SK-N-SH (cell line): ENCODE measurements at regions of chr20 and their contacts with region 1.

Region 1: DNA sequence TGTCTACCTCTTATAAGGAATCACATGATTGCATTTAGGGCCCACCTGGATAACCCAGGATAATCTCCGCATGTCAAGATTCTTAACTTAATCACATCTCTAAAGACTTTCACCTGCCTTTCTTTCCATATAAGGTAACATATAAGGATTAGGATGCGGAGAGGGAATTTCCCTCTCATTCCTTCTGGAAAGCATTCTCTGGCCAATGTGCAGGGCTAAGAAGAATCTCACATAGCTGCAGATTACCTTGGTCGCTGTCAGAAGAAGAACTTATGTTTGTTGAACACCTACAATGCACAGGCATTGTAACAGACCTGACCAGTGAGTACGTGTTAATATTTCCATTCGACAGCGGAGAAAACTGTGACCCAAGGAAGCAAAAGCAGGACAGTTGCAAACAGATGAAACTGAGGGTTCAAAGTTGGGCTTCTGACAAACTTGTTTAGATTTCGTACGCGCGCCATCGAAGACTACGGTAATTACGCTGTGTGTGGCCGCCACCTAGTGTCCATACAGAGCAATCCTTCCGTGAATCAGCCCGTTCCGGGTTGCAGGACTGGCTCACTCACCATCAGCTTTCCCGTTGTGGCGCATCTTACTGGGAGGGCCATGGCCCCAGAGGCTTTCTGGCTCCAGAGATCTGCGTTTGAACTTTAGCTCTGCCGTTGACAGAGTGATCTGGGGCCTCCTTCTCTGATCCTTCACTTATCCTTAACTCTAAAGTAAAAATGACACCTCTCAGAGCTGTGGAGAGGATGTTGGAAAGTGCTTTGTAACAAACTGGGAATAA is 9.5 kb downstream of the C20orf202 start:
- DNase-seq: peak; percentile 74
- H3K4me3 ChIP-seq: no peak overlapping the region; a peak in 1 of 4 replicates
- H3K27ac ChIP-seq: no peak overlapping the region
- H3K4me1 ChIP-seq: no peaks in the 10 kb centered on the region; a peak in 1 of 4 replicates
- H3K27me3 ChIP-seq: no peaks in the 10 kb centered on the region; the same call in 1 of the 2 replicates
- CTCF ChIP-seq: peak; percentile 77
- EP300 ChIP-seq: no peak
- RAD21 ChIP-seq: peak; percentile 82

Region 2: GRCh38 chr20:1191299-1191698 is 21.5 kb before region 1 on chr20:
- CTCF ChIA-PET with region 1: interaction called, 33 read pairs
- POLR2A ChIA-PET with region 1: no interaction called
- DNase-seq: no peak
- H3K4me3 ChIP-seq: no peak overlapping the region
- H3K27ac ChIP-seq: no peak overlapping the region
- H3K4me1 ChIP-seq: no peaks in the 10 kb centered on the region
- H3K27me3 ChIP-seq: no peaks in the 10 kb centered on the region; the same call in 1 of the 2 replicates
- CTCF ChIP-seq: no peak
- EP300 ChIP-seq: no peak
- RAD21 ChIP-seq: no peak

Region 3: DNA sequence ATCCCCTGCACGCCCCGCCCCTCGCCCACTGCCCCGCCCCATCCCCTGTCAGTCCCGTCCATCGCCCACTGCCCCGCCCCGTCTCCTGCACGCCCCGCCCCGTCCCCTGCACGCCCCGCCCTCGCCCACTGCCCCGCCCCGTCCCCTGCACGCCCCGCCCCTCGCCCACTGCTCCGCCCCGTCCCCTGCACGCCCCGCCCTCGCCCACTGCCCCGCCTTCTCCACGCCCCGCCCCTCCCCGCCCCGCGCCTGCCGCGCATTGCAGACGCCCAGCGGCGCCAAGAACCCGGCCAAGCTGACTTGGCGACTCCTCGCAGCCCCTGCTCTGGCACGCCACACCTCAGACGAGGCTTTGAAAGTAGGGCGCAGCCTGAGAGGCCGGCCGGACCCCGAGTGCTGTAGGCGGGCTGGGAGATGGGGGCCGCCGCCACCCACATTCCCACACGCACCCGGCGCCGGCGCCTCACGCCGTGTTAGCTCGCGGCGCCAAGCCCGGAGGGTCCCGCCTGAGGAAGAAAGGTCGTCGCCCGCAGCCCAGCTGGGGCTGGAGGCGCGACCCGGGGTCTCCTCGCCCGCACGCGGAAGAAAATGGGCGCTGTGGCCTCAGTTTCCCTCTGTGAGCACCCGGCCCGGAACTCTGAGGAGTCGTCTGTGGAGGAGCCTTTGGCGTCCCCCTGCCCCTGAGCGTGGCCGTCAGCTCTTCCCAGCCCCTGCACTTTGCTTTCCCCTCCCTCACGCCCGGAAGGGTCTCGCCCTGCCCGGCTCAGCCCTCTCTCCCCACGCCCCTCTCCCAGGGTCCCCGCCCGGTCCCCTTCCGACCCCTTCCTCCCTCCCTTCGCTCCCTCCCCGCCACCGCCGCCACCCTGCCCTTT is 13.2 kb after region 1 on chr20 and contains the start of gene RAD21L1:
- CTCF ChIA-PET with region 1: interaction called, 20 read pairs
- POLR2A ChIA-PET with region 1: no interaction called
- DNase-seq: peak; percentile 100
- H3K4me3 ChIP-seq: peak within 1 kb of the TSS; percentile 80
- H3K27ac ChIP-seq: peak within 1 kb of the TSS in 1 of 2 experiments; percentile 13; a peak in 2 of 4 replicates
- H3K4me1 ChIP-seq: peaks cover 0 to 3% of the 10 kb centered on the region in 2 experiments; a peak in 2 of 4 replicates
- H3K27me3 ChIP-seq: no peaks in the 10 kb centered on the region
- CTCF ChIP-seq: no peak
- EP300 ChIP-seq: no peak
- RAD21 ChIP-seq: no peak
- polyA plus RNA-seq, gene RAD21L1: 0.03 TPM in 1 of 2 replicates, not detected in the other

Region 4: GRCh38 chr20:1401451-1401907 is 188.7 kb after region 1 on chr20:
- CTCF ChIA-PET with region 1: no interaction called
- POLR2A ChIA-PET with region 1: no interaction called
- DNase-seq: no peak
- H3K4me3 ChIP-seq: no peak overlapping the region
- H3K27ac ChIP-seq: no peak overlapping the region
- H3K4me1 ChIP-seq: peaks cover 7 to 15% of the 10 kb centered on the region in 2 experiments; a peak in 3 of 4 replicates
- H3K27me3 ChIP-seq: no peaks in the 10 kb centered on the region
- CTCF ChIP-seq: no peak
- EP300 ChIP-seq: no peak
- RAD21 ChIP-seq: no peak